Ascending aorta (tissue), 2 donors: ENCODE measurements at regions of chr1 and their contacts with region 1.

Region 1: GRCh38 chr1:15028102-15028501 is 125.4 kb upstream of the TMEM51 start:
- DNase-seq: peak; percentile 19 to 88
- H3K4me3 ChIP-seq: no peak overlapping the region
- H3K27ac ChIP-seq: peak overlapping the region; percentile 58 to 77
- H3K4me1 ChIP-seq: peaks cover 4 to 12% of the 10 kb centered on the region in 2 donors
- H3K27me3 ChIP-seq: no peaks in the 10 kb centered on the region
- CTCF ChIP-seq: no peak

Region 2: DNA sequence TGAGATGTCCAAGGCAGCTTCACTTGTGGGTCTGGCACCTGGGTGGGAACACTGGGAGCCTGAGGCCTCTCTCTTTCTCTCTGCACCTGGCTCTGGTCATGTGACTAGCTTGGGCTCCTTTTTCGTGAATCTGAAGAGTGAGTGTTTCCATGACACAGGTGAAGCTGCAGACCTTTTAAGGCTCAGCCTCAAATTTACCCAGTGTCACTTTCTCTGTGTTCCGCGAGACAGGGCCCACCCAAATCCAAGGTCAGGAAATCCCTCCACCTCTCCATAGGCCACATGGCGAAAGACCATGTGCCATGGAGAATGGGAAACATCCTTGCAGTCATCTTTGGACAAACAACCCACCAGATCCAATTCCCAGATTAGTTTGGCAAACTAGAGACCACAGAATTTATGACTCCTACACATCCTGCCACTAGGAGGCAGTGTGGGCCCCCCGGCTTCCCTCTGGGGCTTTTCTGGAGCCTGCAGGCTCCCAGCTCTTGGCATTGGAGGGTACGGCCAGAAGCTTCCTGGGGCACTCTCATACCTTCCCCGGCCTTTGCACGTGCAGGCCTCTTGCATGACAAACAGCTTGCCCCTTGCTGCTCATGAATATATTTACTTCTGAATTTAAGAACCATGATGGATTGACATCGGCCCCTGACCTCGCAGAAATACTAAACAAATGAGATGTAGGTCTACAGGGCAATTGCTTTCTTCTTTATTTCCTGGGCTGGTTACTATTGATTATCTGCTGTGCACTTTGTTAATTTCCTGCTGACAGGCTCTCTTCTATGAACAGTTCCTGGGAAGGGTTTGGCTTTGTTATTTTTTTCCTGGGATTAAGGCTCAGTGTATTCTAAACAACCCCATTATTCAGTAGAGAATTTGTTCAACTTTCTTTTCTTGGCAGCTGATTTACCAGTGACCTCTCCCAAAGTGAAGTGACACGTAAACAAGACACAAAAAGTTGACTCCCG is 248.9 kb before region 1 on chr1:
- intact Hi-C with region 1: loop called (anchors 5 kb)
- DNase-seq: no peak
- H3K4me3 ChIP-seq: no peak overlapping the region
- H3K27ac ChIP-seq: no peak overlapping the region
- H3K4me1 ChIP-seq: no peaks in the 10 kb centered on the region
- H3K27me3 ChIP-seq: no peaks in the 10 kb centered on the region
- CTCF ChIP-seq: peak; percentile 31 to 64 (median 56)

Region 3: GRCh38 chr1:14817223-14818170 is 210.6 kb before region 1 on chr1:
- intact Hi-C with region 1: no loop called
- DNase-seq: no peak
- H3K4me3 ChIP-seq: no peak overlapping the region
- H3K27ac ChIP-seq: no peak overlapping the region
- H3K4me1 ChIP-seq: no peaks in the 10 kb centered on the region
- H3K27me3 ChIP-seq: no peaks in the 10 kb centered on the region
- CTCF ChIP-seq: no peak

Region 4: GRCh38 chr1:14915356-14916054 is 112.6 kb before region 1 on chr1:
- intact Hi-C with region 1: loop called (anchors 2 kb)
- DNase-seq: peak in 1 of 2 donors; percentile 73
- H3K4me3 ChIP-seq: no peak overlapping the region
- H3K27ac ChIP-seq: no peak overlapping the region
- H3K4me1 ChIP-seq: peaks cover 0 to 23% of the 10 kb centered on the region in 2 donors
- H3K27me3 ChIP-seq: no peaks in the 10 kb centered on the region
- CTCF ChIP-seq: peak; percentile 62 to 89 (median 89)

Region 5: GRCh38 chr1:14970115-14970798 is 57.8 kb before region 1 on chr1:
- intact Hi-C with region 1: loop called (anchors 5 kb)
- DNase-seq: peak; percentile 60 to 94
- H3K4me3 ChIP-seq: no peak overlapping the region
- H3K27ac ChIP-seq: peak overlapping the region; percentile 83 to 90
- H3K4me1 ChIP-seq: peaks cover 16 to 39% of the 10 kb centered on the region in 2 donors
- H3K27me3 ChIP-seq: no peaks in the 10 kb centered on the region
- CTCF ChIP-seq: no peak

Region 6: GRCh38 chr1:14987829-14988603 is 40.1 kb before region 1 on chr1:
- intact Hi-C with region 1: no loop called
- DNase-seq: no peak
- H3K4me3 ChIP-seq: no peak overlapping the region
- H3K27ac ChIP-seq: no peak overlapping the region
- H3K4me1 ChIP-seq: no peaks in the 10 kb centered on the region
- H3K27me3 ChIP-seq: no peaks in the 10 kb centered on the region
- CTCF ChIP-seq: no peak